MCF 10A (cell line): ENCODE measurements at regions of chr4 and their contacts with region 1.

Region 1: GRCh38 chr4:122764821-122765215 is 32.3 kb downstream of the BBS12 start:
- DNase-seq: peak; percentile 76
- H3K4me3 Mint-ChIP-seq: peak overlapping the region; percentile 51
- H3K27ac Mint-ChIP-seq: peak overlapping the region; percentile 92
- H3K4me1 Mint-ChIP-seq: peaks cover 17% of the 10 kb centered on the region
- H3K27me3 Mint-ChIP-seq: no peaks in the 10 kb centered on the region
- CTCF ChIP-seq: no peak

Region 2: DNA sequence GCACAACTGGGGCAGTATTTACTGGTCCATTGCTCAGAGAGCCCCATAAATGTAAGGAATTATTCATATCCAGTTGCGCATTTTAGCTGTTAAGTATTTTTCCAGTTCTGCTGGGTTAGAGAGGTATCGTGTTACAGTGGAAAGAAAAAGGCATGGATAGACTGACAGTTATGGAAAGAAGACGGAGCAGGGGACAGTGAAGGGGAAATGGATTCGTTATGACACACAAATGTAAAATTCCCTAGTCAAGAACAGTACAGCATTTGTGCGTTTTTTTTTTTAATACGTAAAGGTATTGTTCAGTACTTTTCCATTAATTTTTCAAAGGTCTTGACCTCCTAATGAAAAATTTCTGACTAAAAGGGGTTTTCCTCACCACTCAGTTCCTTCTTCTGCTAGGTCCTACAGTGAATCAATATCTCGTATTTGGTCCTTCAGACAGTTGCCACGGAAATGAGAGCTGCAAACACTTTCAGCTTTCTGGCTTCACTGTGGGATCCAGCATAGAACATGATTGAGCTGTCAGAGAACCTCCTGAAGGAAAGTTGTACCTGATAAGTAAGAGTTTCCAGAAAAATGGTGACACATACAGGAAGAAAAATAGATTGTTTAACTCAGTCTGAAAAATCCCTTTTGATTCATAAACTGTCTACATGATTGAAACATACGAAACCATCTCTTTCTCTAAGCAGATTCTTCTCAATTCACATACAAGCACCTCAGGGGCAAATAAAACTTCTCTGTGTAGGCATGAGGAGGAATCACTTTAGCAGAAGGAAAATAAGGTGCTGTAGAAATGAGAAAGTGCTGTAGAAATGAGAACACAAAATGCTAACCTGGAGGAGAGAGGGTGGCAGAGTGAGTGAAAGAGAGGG is 54.1 kb before region 1 on chr4:
- CTCF ChIA-PET with region 1: no interaction called
- POLR2A ChIA-PET with region 1: no interaction called
- intact Hi-C with region 1: no loop called
- DNase-seq: no peak
- H3K4me3 Mint-ChIP-seq: no peak overlapping the region
- H3K27ac Mint-ChIP-seq: peak overlapping the region; percentile 59
- H3K4me1 Mint-ChIP-seq: peaks cover 6% of the 10 kb centered on the region
- H3K27me3 Mint-ChIP-seq: no peaks in the 10 kb centered on the region
- CTCF ChIP-seq: no peak

Region 3: GRCh38 chr4:122777846-122778655 is 13.2 kb after region 1 on chr4:
- CTCF ChIA-PET with region 1: interaction called, 5 read pairs
- POLR2A ChIA-PET with region 1: interaction called, 32 read pairs
- intact Hi-C with region 1: loop called (anchors 1 kb)
- DNase-seq: peak; percentile 74
- H3K4me3 Mint-ChIP-seq: peak overlapping the region; percentile 35
- H3K27ac Mint-ChIP-seq: peak overlapping the region; percentile 86
- H3K4me1 Mint-ChIP-seq: peaks cover 34% of the 10 kb centered on the region
- H3K27me3 Mint-ChIP-seq: no peaks in the 10 kb centered on the region
- CTCF ChIP-seq: no peak

Region 4: DNA sequence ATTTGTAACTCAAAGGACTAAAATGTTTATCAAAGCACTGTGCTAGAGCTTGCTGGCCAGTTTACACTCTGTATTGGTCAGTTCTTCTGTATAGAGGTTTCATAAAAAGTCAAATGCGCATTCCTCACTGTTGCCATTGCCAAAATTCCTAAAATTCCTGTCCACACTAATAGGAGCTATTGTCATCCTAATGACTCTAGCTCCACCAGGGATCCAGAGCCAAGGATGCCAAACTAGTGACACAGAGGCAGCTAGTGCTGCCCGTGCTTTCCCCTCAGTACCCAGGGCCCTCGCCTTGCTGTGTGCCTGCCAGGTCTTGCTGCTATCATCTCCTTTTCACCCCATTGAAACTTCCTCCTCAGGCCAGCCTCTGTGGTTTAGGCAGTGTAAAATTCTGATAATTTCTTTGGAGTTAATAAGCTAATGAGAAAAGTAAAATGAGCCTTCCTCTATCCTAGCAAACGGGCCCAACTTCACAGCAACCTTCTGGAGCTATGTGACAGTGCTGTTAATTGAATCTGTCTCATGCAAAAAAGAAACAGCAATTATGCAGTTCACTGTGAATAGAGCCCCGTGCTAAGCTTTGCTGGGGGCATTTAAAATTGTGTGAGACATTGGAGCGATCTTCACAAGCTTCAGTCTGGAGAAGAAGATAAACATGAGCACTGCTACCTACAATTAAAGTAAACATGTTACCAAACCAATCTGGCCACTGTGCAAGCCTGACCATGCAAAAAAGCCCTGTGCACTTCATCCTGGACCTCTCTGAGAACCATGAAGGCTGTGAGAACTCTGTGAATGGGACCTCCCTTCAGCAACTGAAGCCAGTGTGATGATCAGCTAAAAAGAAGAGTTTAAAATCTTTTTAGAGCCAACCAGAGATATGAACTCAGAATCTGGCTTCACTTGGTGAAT is 18.7 kb after region 1 on chr4:
- CTCF ChIA-PET with region 1: interaction called, 8 read pairs
- POLR2A ChIA-PET with region 1: interaction called, 32 read pairs
- intact Hi-C with region 1: loop called (anchors 1 kb)
- DNase-seq: peak; percentile 77
- H3K4me3 Mint-ChIP-seq: peak overlapping the region; percentile 3
- H3K27ac Mint-ChIP-seq: peak overlapping the region; percentile 57
- H3K4me1 Mint-ChIP-seq: peaks cover 31% of the 10 kb centered on the region
- H3K27me3 Mint-ChIP-seq: no peaks in the 10 kb centered on the region
- CTCF ChIP-seq: no peak